Naive thymus-derived CD8-positive, alpha-beta T cell (primary cell): ENCODE measurements at regions of chr21 and their contacts with region 1.

Region 1: GRCh38 chr21:32770871-32771523 is 558 bp downstream of the PAXBP1 start:
- DNase-seq: peak in 6 of 10 donors; percentile 25 to 71 (median 38)
- ATAC-seq: peak; percentile 28 to 48
- H3K4me3 Mint-ChIP-seq: peak overlapping the region; percentile 89 to 100 (median 96)
- H3K27ac Mint-ChIP-seq: peak overlapping the region; percentile 91 to 100 (median 94)
- H3K4me1 Mint-ChIP-seq: peaks cover 33 to 67% (median 65%) of the 10 kb centered on the region in 4 donors
- H3K27me3 Mint-ChIP-seq: peaks cover 0 to 4% (median 0%) of the 10 kb centered on the region in 5 donors

Region 2: GRCh38 chr21:32612075-32612998 is 158.7 kb before region 1 on chr21 and contains the start of gene CFAP298:
- POLR2A ChIA-PET with region 1: interaction called, 20 read pairs
- DNase-seq: peak; percentile 71 to 95 (median 92)
- ATAC-seq: peak; percentile 89 to 93
- H3K4me3 Mint-ChIP-seq: peak within 1 kb of the TSS; percentile 90 to 100 (median 97)
- H3K27ac Mint-ChIP-seq: peak within 1 kb of the TSS; percentile 91 to 99 (median 99)
- H3K4me1 Mint-ChIP-seq: peaks cover 8 to 31% (median 18%) of the 10 kb centered on the region in 4 donors
- H3K27me3 Mint-ChIP-seq: peaks cover 0 to 3% (median 0%) of the 10 kb centered on the region in 5 donors
- polyA plus RNA-seq, gene CFAP298: 59.4 to 64.2 (median 62.3) TPM

Region 3: DNA sequence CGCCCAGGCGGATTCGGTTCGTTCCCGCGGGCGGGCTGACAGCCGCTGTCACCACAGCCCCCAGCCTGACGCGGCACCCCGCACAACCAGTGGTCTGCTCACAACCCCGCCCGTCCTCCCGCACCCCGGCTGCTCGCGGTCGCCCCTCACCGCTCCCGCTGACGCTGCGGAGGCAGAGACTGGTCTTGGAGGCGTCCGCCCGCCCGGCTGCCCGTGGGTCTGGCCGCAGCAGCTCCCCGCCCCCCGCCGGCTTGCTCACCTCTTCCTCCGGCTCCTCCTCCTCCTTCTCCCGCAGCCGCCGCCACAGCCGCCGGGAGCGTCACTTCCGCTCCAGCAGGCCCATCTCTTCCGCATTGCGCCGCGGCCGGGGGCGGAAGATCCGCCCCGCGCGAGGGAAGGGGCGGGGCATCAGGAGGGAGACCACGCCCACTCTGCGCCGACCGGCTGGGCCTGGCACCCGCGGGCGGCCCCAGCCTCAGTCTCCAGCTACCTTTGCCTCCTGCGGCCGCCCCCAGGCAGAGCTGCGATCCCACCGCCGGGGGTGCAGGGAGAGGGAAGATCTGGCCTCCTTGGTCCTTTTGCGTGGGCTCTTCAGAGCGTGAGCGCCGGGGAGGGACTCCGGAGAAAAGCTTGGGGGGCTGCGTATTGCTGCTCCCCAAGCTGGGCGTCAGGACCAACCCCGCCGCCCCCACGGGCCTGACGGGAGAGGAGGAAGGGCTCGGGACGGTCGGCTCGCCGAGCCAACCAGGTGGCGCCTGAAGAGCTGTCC is 43.1 kb before region 1 on chr21 and contains the start of gene SYNJ1:
- POLR2A ChIA-PET with region 1: interaction called, 30 read pairs
- DNase-seq: peak; percentile 90 to 96 (median 94)
- ATAC-seq: peak; percentile 82 to 87
- H3K4me3 Mint-ChIP-seq: peak within 1 kb of the TSS; percentile 91 to 99 (median 96)
- H3K27ac Mint-ChIP-seq: peak within 1 kb of the TSS; percentile 88 to 99 (median 94)
- H3K4me1 Mint-ChIP-seq: peaks cover 24 to 63% (median 58%) of the 10 kb centered on the region in 4 donors
- H3K27me3 Mint-ChIP-seq: no peaks in the 10 kb centered on the region
- polyA plus RNA-seq, gene SYNJ1: 2.5 to 8.0 (median 6.0) TPM

Region 4: DNA sequence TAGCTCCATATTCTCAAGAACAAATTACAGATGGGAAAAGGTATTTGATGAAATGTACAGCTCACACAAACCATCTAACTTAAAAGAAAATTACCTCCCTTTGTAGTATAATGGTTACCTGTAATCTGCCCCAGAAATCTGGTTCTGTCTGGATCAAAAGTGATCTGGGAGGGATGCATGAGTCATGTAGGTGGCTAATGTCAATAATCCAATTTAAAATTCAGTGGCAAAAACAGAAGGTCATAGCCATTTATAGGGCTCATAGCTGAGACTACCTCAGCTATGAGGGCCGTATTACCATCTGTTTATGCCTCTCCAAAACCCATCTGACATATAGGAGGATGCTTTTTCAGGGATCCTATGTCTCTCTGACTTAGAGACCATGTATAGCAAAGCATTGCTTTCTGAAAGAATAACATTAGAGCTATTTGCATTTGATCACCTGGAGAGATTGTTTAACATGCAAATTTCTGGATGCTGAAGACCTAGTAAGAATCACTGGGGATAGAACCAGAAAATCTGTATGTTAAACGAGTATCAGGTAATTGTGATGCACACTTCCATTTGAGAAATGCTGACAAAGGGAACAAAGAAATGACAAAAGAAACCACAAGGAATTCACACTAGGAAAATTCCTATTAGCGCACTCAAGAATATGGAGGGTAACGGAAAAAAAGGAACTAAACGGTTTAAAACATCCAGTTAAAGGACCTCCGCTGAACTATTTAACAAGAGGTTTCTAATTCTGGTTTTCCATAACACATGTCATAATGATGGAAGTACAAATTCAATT is 17.0 kb before region 1 on chr21:
- POLR2A ChIA-PET with region 1: interaction called, 15 read pairs
- DNase-seq: no peak
- ATAC-seq: no peak
- H3K4me3 Mint-ChIP-seq: no peak overlapping the region
- H3K27ac Mint-ChIP-seq: peak overlapping the region in 3 of 10 donors; percentile 2 to 34 (median 8)
- H3K4me1 Mint-ChIP-seq: peaks cover 0 to 3% (median 3%) of the 10 kb centered on the region in 4 donors
- H3K27me3 Mint-ChIP-seq: no peaks in the 10 kb centered on the region

Region 5: GRCh38 chr21:33479679-33480480 is 708.9 kb after region 1 on chr21 and contains the start of gene TMEM50B:
- POLR2A ChIA-PET with region 1: interaction called, 10 read pairs
- DNase-seq: peak; percentile 89 to 98 (median 94)
- ATAC-seq: peak; percentile 87 to 88
- H3K4me3 Mint-ChIP-seq: peak within 1 kb of the TSS; percentile 81 to 97 (median 94)
- H3K27ac Mint-ChIP-seq: peak within 1 kb of the TSS; percentile 65 to 98 (median 96)
- H3K4me1 Mint-ChIP-seq: peaks cover 11 to 32% (median 24%) of the 10 kb centered on the region in 4 donors
- H3K27me3 Mint-ChIP-seq: no peaks in the 10 kb centered on the region
- polyA plus RNA-seq, gene TMEM50B: 42.3 to 47.9 (median 45.4) TPM